ENCODE measurements at regions of chr9 and their contacts with region 1.

Region 1: GRCh38 chr9:6764935-6765334 is 7.2 kb downstream of the KDM4C start:
- DNase-seq: peak in 1 of 2 experiments; percentile 48
- H3K4me3 ChIP-seq: no peak overlapping the region
- H3K4me3 Mint-ChIP-seq: peak overlapping the region; percentile 59
- H3K27ac Mint-ChIP-seq: peak overlapping the region; percentile 77
- H3K4me1 ChIP-seq: peaks cover 45% of the 10 kb centered on the region
- H3K4me1 Mint-ChIP-seq: peaks cover 21% of the 10 kb centered on the region
- H3K27me3 ChIP-seq: no peaks in the 10 kb centered on the region
- H3K27me3 Mint-ChIP-seq: no peaks in the 10 kb centered on the region
- CTCF ChIP-seq: no peak

Region 2: DNA sequence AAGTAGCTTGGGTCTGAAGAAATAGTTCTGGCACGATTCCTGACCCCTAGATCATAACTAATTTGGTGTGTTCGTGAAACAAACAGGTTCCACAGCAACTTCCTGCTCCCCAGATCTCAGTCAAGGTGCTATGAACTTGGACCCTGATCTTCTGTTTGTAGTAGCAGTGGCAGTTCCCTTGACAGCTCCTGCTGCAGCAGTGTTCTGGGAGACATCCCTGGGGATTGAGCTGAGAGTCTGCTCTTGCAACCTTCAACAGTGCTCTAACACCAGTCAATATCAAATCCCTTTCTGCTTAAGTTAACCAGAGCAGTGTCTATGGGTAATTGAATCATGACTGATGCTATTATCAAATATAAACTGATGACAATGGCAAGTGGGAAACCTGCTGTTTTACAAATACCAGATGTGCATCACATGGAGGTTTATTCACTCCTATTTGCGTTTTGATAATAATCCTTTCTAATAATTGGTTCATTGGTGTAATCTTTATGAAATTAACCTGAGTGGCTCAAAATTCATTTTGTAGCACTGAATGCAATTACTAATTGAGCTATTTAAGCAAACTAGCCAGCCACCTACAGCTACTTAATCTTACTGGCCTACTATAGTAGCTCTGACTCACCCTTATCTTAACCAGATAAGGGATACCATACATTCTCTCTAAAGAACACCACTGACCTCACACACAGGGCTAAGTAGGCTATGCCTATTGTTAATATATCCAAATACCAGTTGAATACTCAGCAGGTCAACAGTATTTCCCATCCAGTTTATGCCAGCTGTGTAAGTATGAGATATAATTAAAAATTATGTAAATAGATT is 14.7 kb after region 1 on chr9:
- CTCF ChIA-PET with region 1: no interaction called
- POLR2A ChIA-PET with region 1: interaction called, 3 read pairs
- intact Hi-C with region 1: loop called (anchors 1 kb)
- DNase-seq: peak in 1 of 2 experiments; percentile 40
- H3K4me3 ChIP-seq: no peak overlapping the region
- H3K4me3 Mint-ChIP-seq: no peak overlapping the region
- H3K27ac Mint-ChIP-seq: peak overlapping the region; percentile 51
- H3K4me1 ChIP-seq: peaks cover 59% of the 10 kb centered on the region
- H3K4me1 Mint-ChIP-seq: peaks cover 16% of the 10 kb centered on the region
- H3K27me3 ChIP-seq: no peaks in the 10 kb centered on the region
- H3K27me3 Mint-ChIP-seq: no peaks in the 10 kb centered on the region
- CTCF ChIP-seq: no peak

Region 3: GRCh38 chr9:6877671-6878161 is 112.8 kb after region 1 on chr9:
- CTCF ChIA-PET with region 1: no interaction called
- POLR2A ChIA-PET with region 1: no interaction called
- intact Hi-C with region 1: loop called (anchors 5 kb)
- DNase-seq: peak; percentile 70 to 78
- H3K4me3 ChIP-seq: no peak overlapping the region
- H3K4me3 Mint-ChIP-seq: peak overlapping the region; percentile 66
- H3K27ac Mint-ChIP-seq: peak overlapping the region; percentile 77
- H3K4me1 ChIP-seq: peaks cover 70% of the 10 kb centered on the region
- H3K4me1 Mint-ChIP-seq: peaks cover 44% of the 10 kb centered on the region
- H3K27me3 ChIP-seq: no peaks in the 10 kb centered on the region
- H3K27me3 Mint-ChIP-seq: no peaks in the 10 kb centered on the region
- CTCF ChIP-seq: no peak

Measured in Caco-2 (cell line).